B cell (primary cell): ENCODE measurements at regions of chr15 and their contacts with region 1.

Region 1: GRCh38 chr15:93005133-93005532 is 83.9 kb downstream of the RGMA start:
- DNase-seq: no peak
- ATAC-seq: no peak
- H3K4me3 ChIP-seq: no peak overlapping the region
- H3K4me3 Mint-ChIP-seq: no peak overlapping the region
- H3K27ac ChIP-seq: no peak overlapping the region
- H3K27ac Mint-ChIP-seq: no peak overlapping the region
- H3K4me1 ChIP-seq: no peaks in the 10 kb centered on the region
- H3K4me1 Mint-ChIP-seq: no peaks in the 10 kb centered on the region
- H3K27me3 ChIP-seq: no peaks in the 10 kb centered on the region
- H3K27me3 Mint-ChIP-seq: no peaks in the 10 kb centered on the region
- CTCF ChIP-seq: no peak

Region 2: GRCh38 chr15:92968926-92969651 is 36.0 kb before region 1 on chr15:
- CTCF ChIA-PET with region 1: no interaction called
- POLR2A ChIA-PET with region 1: no interaction called
- intact Hi-C with region 1: loop called (anchors 5 kb)
- DNase-seq: no peak
- ATAC-seq: peak; percentile 24
- H3K4me3 ChIP-seq: no peak overlapping the region
- H3K4me3 Mint-ChIP-seq: no peak overlapping the region
- H3K27ac ChIP-seq: peak overlapping the region in 1 of 2 donors; percentile 43
- H3K27ac Mint-ChIP-seq: peak overlapping the region; percentile 69
- H3K4me1 ChIP-seq: peaks cover 0 to 9% of the 10 kb centered on the region in 2 donors
- H3K4me1 Mint-ChIP-seq: peaks cover 22% of the 10 kb centered on the region
- H3K27me3 ChIP-seq: no peaks in the 10 kb centered on the region
- H3K27me3 Mint-ChIP-seq: no peaks in the 10 kb centered on the region
- CTCF ChIP-seq: no peak

Region 3: DNA sequence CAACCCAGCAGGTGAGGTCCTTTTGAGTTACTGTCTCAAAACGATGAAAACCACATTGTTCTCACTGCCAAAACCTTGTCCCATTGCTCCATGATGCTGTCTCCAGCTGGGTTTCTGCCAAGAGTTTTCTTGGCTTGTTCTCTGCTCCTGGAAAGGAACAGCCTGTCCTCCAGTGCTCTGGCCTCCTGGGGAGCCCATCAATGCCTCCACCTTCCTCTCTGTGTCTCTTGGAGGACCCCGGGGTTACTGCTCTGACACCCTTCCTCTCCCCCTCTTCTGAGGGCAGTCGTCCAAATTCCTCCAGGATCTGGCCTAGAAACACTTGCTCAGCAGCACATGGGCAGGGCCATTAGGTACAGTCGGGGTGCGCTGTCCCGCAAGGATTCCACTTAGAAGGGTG is 147.8 kb after region 1 on chr15:
- CTCF ChIA-PET with region 1: no interaction called
- POLR2A ChIA-PET with region 1: no interaction called
- intact Hi-C with region 1: no loop called
- DNase-seq: no peak
- ATAC-seq: no peak
- H3K4me3 ChIP-seq: no peak overlapping the region
- H3K4me3 Mint-ChIP-seq: no peak overlapping the region
- H3K27ac ChIP-seq: no peak overlapping the region
- H3K27ac Mint-ChIP-seq: no peak overlapping the region
- H3K4me1 ChIP-seq: no peaks in the 10 kb centered on the region
- H3K4me1 Mint-ChIP-seq: no peaks in the 10 kb centered on the region
- H3K27me3 ChIP-seq: peaks cover 0 to 6% (median 0%) of the 10 kb centered on the region in 4 experiments
- H3K27me3 Mint-ChIP-seq: peaks cover 28% of the 10 kb centered on the region
- CTCF ChIP-seq: no peak

Region 4: GRCh38 chr15:93321881-93322289 is 316.8 kb after region 1 on chr15:
- CTCF ChIA-PET with region 1: no interaction called
- POLR2A ChIA-PET with region 1: no interaction called
- intact Hi-C with region 1: no loop called
- DNase-seq: no peak
- ATAC-seq: no peak
- H3K4me3 ChIP-seq: no peak overlapping the region
- H3K4me3 Mint-ChIP-seq: no peak overlapping the region
- H3K27ac ChIP-seq: no peak overlapping the region
- H3K27ac Mint-ChIP-seq: no peak overlapping the region
- H3K4me1 ChIP-seq: no peaks in the 10 kb centered on the region
- H3K4me1 Mint-ChIP-seq: no peaks in the 10 kb centered on the region
- H3K27me3 ChIP-seq: no peaks in the 10 kb centered on the region
- H3K27me3 Mint-ChIP-seq: no peaks in the 10 kb centered on the region
- CTCF ChIP-seq: no peak